MCF 10A (cell line): ENCODE measurements at regions of chr11 and their contacts with region 1.

Region 1: GRCh38 chr11:11841723-11842420 is at the start of gene USP47:
- DNase-seq: peak; percentile 87
- H3K4me3 Mint-ChIP-seq: no peak within 1 kb of the TSS
- H3K27ac Mint-ChIP-seq: no peak within 1 kb of the TSS
- H3K4me1 Mint-ChIP-seq: no peaks in the 10 kb centered on the region
- H3K27me3 Mint-ChIP-seq: no peaks in the 10 kb centered on the region
- CTCF ChIP-seq: peak; percentile 58
- total RNA-seq, gene USP47: 41.6 and 46.1 TPM in 2 replicates

Region 2: GRCh38 chr11:11706022-11706421 is 135.8 kb before region 1 on chr11:
- CTCF ChIA-PET with region 1: no interaction called
- POLR2A ChIA-PET with region 1: no interaction called
- intact Hi-C with region 1: no loop called
- DNase-seq: peak; percentile 61
- H3K4me3 Mint-ChIP-seq: no peak overlapping the region
- H3K27ac Mint-ChIP-seq: peak overlapping the region; percentile 75
- H3K4me1 Mint-ChIP-seq: peaks cover 32% of the 10 kb centered on the region
- H3K27me3 Mint-ChIP-seq: no peaks in the 10 kb centered on the region
- CTCF ChIP-seq: no peak

Region 3: DNA sequence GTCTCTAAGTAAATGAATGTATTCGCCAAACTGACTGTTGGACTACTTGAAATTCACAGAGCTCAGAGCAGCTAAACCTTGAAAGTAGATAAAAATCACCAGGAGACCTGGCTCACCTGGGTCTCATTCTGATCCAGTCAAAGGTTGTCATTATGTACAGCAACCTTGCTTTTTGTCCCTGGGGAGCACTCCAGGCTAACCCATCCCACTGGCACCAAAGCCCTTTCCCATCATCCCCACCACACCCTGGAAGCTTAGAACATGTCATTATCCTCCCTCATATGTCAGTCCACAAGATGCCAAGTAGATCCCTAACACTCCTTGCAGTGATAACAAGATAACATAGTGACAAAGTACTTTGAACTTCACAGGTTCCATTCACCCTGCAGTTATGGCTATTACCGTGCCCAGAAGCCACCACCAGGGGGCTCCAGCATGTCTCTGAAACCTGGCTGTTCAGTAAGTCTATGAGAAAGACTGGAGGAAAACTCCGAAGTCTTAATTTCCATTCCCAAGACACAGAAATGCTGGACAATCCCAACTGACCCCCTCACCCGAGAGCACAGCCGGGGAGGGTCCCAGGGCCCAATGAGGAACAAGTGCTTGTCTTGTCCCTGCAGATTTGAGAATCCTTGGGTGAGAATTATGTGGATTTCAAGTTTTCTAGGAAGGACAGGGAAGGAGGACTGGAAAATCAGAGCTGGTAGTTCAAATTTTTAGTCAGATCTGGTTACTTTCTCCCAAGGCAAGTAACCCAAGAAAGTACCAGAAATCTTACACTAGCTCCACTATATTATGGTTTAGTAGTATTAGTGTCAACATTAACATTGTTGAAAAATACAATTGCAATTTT is 43.1 kb before region 1 on chr11:
- CTCF ChIA-PET with region 1: interaction called, 11 read pairs
- POLR2A ChIA-PET with region 1: interaction called, 6 read pairs
- intact Hi-C with region 1: no loop called
- DNase-seq: peak; percentile 83
- H3K4me3 Mint-ChIP-seq: no peak overlapping the region
- H3K27ac Mint-ChIP-seq: no peak overlapping the region
- H3K4me1 Mint-ChIP-seq: no peaks in the 10 kb centered on the region
- H3K27me3 Mint-ChIP-seq: peaks cover 28% of the 10 kb centered on the region
- CTCF ChIP-seq: peak; percentile 79

Region 4: DNA sequence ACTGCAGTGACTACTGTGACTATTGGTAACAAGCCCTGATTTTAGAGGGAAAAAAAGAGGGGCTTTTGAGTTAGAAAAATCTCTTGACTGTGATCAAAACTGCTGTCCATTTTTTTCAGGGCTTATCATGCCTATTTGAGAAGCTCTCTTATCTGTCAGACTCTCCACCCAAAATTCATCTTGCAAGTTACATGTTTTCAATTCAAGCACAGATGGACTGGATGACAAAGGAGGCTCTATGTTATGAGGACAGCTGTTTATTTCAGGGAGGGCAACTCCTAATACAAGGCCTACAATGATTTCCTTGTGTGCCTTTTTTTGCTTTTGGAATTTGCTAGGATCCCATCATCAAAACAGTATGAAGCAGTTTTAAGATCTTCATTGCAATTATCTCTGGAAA is 35.3 kb before region 1 on chr11:
- CTCF ChIA-PET with region 1: interaction called, 3 read pairs
- POLR2A ChIA-PET with region 1: interaction called, 10 read pairs
- intact Hi-C with region 1: no loop called
- DNase-seq: no peak
- H3K4me3 Mint-ChIP-seq: no peak overlapping the region
- H3K27ac Mint-ChIP-seq: no peak overlapping the region
- H3K4me1 Mint-ChIP-seq: no peaks in the 10 kb centered on the region
- H3K27me3 Mint-ChIP-seq: no peaks in the 10 kb centered on the region
- CTCF ChIP-seq: no peak

Region 5: GRCh38 chr11:11813288-11813962 is 28.4 kb before region 1 on chr11:
- CTCF ChIA-PET with region 1: interaction called, 3 read pairs
- POLR2A ChIA-PET with region 1: interaction called, 23 read pairs
- intact Hi-C with region 1: no loop called
- DNase-seq: peak; percentile 80
- H3K4me3 Mint-ChIP-seq: no peak overlapping the region
- H3K27ac Mint-ChIP-seq: peak overlapping the region; percentile 57
- H3K4me1 Mint-ChIP-seq: peaks cover 14% of the 10 kb centered on the region
- H3K27me3 Mint-ChIP-seq: no peaks in the 10 kb centered on the region
- CTCF ChIP-seq: no peak

Region 6: DNA sequence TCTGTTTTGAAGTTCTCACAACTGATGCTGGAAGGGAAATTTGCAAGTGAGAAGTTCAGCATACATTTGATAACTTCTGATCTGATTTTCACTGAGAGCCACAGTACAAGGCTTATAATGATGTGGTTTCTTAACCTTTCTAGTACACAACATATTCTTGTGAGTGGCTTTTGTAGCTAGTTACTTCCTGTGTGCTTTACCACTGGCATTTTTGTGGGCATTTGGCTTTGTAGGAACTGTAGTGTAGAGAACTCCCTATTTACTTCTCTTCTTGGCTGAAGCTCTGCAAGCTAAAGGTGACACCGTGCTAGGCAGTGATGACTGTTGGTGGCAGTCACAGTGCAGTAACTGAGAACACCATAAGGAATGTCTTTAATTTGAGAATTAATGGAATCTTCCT is 14.8 kb after region 1 on chr11:
- CTCF ChIA-PET with region 1: interaction called, 4 read pairs
- POLR2A ChIA-PET with region 1: interaction called, 54 read pairs
- intact Hi-C with region 1: no loop called
- DNase-seq: no peak
- H3K4me3 Mint-ChIP-seq: no peak overlapping the region
- H3K27ac Mint-ChIP-seq: no peak overlapping the region
- H3K4me1 Mint-ChIP-seq: peaks cover 38% of the 10 kb centered on the region
- H3K27me3 Mint-ChIP-seq: no peaks in the 10 kb centered on the region
- CTCF ChIP-seq: no peak

Region 7: GRCh38 chr11:11876458-11876857 is 34.6 kb after region 1 on chr11:
- CTCF ChIA-PET with region 1: interaction called, 5 read pairs
- POLR2A ChIA-PET with region 1: interaction called, 10 read pairs
- intact Hi-C with region 1: no loop called
- DNase-seq: peak; percentile 18
- H3K4me3 Mint-ChIP-seq: no peak overlapping the region
- H3K27ac Mint-ChIP-seq: no peak overlapping the region
- H3K4me1 Mint-ChIP-seq: peaks cover 31% of the 10 kb centered on the region
- H3K27me3 Mint-ChIP-seq: no peaks in the 10 kb centered on the region
- CTCF ChIP-seq: peak; percentile 10

Region 8: GRCh38 chr11:11895672-11896071 is 53.8 kb after region 1 on chr11:
- CTCF ChIA-PET with region 1: no interaction called
- POLR2A ChIA-PET with region 1: interaction called, 11 read pairs
- intact Hi-C with region 1: no loop called
- DNase-seq: no peak
- H3K4me3 Mint-ChIP-seq: no peak overlapping the region
- H3K27ac Mint-ChIP-seq: no peak overlapping the region
- H3K4me1 Mint-ChIP-seq: peaks cover 7% of the 10 kb centered on the region
- H3K27me3 Mint-ChIP-seq: no peaks in the 10 kb centered on the region
- CTCF ChIP-seq: peak; percentile 3

Region 9: GRCh38 chr11:11960687-11961086 is 118.8 kb after region 1 on chr11:
- CTCF ChIA-PET with region 1: no interaction called
- POLR2A ChIA-PET with region 1: no interaction called
- intact Hi-C with region 1: no loop called
- DNase-seq: no peak
- H3K4me3 Mint-ChIP-seq: no peak overlapping the region
- H3K27ac Mint-ChIP-seq: no peak overlapping the region
- H3K4me1 Mint-ChIP-seq: no peaks in the 10 kb centered on the region
- H3K27me3 Mint-ChIP-seq: no peaks in the 10 kb centered on the region
- CTCF ChIP-seq: no peak